ENCODE measurements at regions of chr9 and their contacts with region 1.

Region 1: DNA sequence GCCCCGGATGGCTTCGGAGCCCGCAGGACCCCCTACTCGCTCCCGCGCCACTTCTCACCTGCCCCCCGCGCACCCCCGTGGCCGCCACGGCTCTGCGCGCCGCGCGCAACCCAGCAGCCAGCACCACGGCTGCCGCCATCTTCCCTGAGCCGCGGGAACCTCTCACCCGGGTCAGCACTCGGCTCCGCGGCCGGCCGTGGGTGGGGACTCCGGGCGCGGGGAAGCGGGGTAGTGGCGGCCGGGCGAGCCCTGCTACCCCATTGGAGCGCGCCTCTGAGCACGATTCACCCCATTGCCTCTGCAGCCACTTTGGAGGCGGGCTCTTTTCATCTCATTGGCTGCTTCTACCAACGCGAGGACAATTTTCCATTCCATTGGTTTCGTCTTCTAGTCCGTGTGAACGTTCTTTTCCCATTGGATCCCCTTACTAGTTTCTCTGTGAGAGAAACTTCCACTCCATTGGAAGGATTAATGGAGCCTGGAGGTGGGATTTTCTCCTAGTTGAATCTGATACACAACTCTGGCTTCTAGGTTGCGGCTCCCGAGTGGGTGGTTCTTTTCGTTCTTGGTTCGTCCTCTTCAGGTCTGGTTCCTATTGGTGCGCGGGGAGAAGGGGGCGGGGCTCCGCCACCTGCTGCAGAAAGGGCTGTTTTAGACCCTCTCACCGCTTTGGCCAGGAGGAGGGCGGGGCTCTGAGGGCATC is at the start of gene HINT2:
- DNase-seq: peak; percentile 100
- ATAC-seq: peak; percentile 85
- H3K4me3 Mint-ChIP-seq: peak within 1 kb of the TSS; percentile 92
- H3K27ac Mint-ChIP-seq: peak within 1 kb of the TSS; percentile 97
- H3K4me1 Mint-ChIP-seq: peaks cover 34% of the 10 kb centered on the region
- H3K27me3 Mint-ChIP-seq: no peaks in the 10 kb centered on the region
- CTCF ChIP-seq: no peak
- total RNA-seq, gene HINT2: 53.4 to 62.7 TPM

Region 2: GRCh38 chr9:35657546-35658136 is 157.4 kb before region 1 on chr9 and contains the start of gene RMRP:
- CTCF ChIA-PET with region 1: interaction called, 3 read pairs
- POLR2A ChIA-PET with region 1: interaction called, 3 read pairs
- intact Hi-C with region 1: loop called (anchors 10 kb)
- DNase-seq: peak; percentile 97
- ATAC-seq: peak; percentile 95
- H3K4me3 Mint-ChIP-seq: peak within 1 kb of the TSS; percentile 81
- H3K27ac Mint-ChIP-seq: peak within 1 kb of the TSS; percentile 96
- H3K4me1 Mint-ChIP-seq: peaks cover 59% of the 10 kb centered on the region
- H3K27me3 Mint-ChIP-seq: peaks cover 2% of the 10 kb centered on the region
- CTCF ChIP-seq: no peak
- total RNA-seq, gene RMRP: 13,164 to 13,311 TPM